ENCODE measurements at regions of chr22 and their contacts with region 1.

Region 1: DNA sequence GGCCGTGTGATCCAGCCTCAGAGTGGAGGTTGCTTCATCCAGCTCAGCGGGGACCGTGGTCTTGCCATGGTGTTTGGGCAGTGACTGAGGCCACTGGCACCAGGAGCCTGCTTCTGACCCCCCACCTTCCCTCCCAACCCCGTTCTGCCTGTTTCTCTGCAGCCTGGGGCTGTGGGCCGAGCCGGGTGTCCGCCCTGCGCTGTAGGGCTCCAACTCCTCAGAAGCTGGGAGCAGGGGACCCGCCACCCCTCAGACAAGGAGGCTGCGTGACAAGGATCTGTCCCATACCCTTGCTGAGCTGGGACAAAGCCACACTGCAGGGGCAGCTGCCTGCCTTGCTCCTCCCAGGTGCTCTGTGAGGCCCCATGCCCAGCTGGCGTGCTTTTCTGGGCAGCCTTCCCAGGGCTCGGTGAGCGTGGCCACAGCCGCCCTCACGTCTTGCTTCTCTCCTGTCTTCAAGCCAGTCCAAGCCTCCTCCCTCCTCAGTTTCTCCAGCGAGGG is 11.7 kb upstream of the ARFGAP3 start:
- DNase-seq: no peak
- ATAC-seq: no peak
- H3K4me3 Mint-ChIP-seq: no peak overlapping the region
- H3K27ac Mint-ChIP-seq: no peak overlapping the region
- H3K4me1 Mint-ChIP-seq: peaks cover 4% of the 10 kb centered on the region; the same call in 1 of the 2 replicates
- H3K27me3 Mint-ChIP-seq: no peaks in the 10 kb centered on the region
- CTCF ChIP-seq: no peak

Region 2: GRCh38 chr22:42844756-42845155 is 24.0 kb before region 1 on chr22:
- CTCF ChIA-PET with region 1: interaction called, 12 read pairs
- POLR2A ChIA-PET with region 1: no interaction called
- DNase-seq: no peak
- ATAC-seq: no peak
- H3K4me3 Mint-ChIP-seq: no peak overlapping the region
- H3K27ac Mint-ChIP-seq: no peak overlapping the region
- H3K4me1 Mint-ChIP-seq: no peaks in the 10 kb centered on the region
- H3K27me3 Mint-ChIP-seq: no peaks in the 10 kb centered on the region
- CTCF ChIP-seq: no peak

Region 3: GRCh38 chr22:42881982-42882656 is 13.3 kb after region 1 on chr22:
- CTCF ChIA-PET with region 1: interaction called, 15 read pairs
- POLR2A ChIA-PET with region 1: interaction called, 6 read pairs
- DNase-seq: no peak
- ATAC-seq: no peak
- H3K4me3 Mint-ChIP-seq: no peak overlapping the region
- H3K27ac Mint-ChIP-seq: peak overlapping the region; percentile 54; the same call in 1 of the 2 replicates
- H3K4me1 Mint-ChIP-seq: peaks cover 10% of the 10 kb centered on the region
- H3K27me3 Mint-ChIP-seq: no peaks in the 10 kb centered on the region
- CTCF ChIP-seq: no peak

Region 4: GRCh38 chr22:42901790-42902508 is 33.1 kb after region 1 on chr22:
- CTCF ChIA-PET with region 1: interaction called, 26 read pairs
- POLR2A ChIA-PET with region 1: no interaction called
- DNase-seq: no peak
- ATAC-seq: no peak
- H3K4me3 Mint-ChIP-seq: no peak overlapping the region
- H3K27ac Mint-ChIP-seq: 0 out of 2 replicates have a peak overlapping the region, but pooled peaks have one; percentile 13
- H3K4me1 Mint-ChIP-seq: peaks cover 22% of the 10 kb centered on the region
- H3K27me3 Mint-ChIP-seq: no peaks in the 10 kb centered on the region
- CTCF ChIP-seq: 0 out of 2 replicates have a peak, but pooled peaks have one; percentile 7

Region 5: GRCh38 chr22:43053176-43053575 is 184.4 kb after region 1 on chr22:
- CTCF ChIA-PET with region 1: interaction called, 56 read pairs
- POLR2A ChIA-PET with region 1: no interaction called
- DNase-seq: peak; percentile 24
- ATAC-seq: peak; percentile 74
- H3K4me3 Mint-ChIP-seq: no peak overlapping the region
- H3K27ac Mint-ChIP-seq: no peak overlapping the region
- H3K4me1 Mint-ChIP-seq: no peaks in the 10 kb centered on the region
- H3K27me3 Mint-ChIP-seq: no peaks in the 10 kb centered on the region
- CTCF ChIP-seq: peak; percentile 60